ENCODE measurements at regions of chr5 and their contacts with region 1.

Region 1: GRCh38 chr5:67209142-67209771 is 12.7 kb upstream of the CD180 start:
- DNase-seq: peak; percentile 76 to 80
- H3K4me3 ChIP-seq: no peak overlapping the region
- H3K4me3 Mint-ChIP-seq: no peak overlapping the region
- H3K27ac Mint-ChIP-seq: no peak overlapping the region
- H3K4me1 ChIP-seq: no peaks in the 10 kb centered on the region
- H3K4me1 Mint-ChIP-seq: peaks cover 11% of the 10 kb centered on the region
- H3K27me3 ChIP-seq: no peaks in the 10 kb centered on the region
- H3K27me3 Mint-ChIP-seq: no peaks in the 10 kb centered on the region
- CTCF ChIP-seq: peak; percentile 72 to 84

Region 2: DNA sequence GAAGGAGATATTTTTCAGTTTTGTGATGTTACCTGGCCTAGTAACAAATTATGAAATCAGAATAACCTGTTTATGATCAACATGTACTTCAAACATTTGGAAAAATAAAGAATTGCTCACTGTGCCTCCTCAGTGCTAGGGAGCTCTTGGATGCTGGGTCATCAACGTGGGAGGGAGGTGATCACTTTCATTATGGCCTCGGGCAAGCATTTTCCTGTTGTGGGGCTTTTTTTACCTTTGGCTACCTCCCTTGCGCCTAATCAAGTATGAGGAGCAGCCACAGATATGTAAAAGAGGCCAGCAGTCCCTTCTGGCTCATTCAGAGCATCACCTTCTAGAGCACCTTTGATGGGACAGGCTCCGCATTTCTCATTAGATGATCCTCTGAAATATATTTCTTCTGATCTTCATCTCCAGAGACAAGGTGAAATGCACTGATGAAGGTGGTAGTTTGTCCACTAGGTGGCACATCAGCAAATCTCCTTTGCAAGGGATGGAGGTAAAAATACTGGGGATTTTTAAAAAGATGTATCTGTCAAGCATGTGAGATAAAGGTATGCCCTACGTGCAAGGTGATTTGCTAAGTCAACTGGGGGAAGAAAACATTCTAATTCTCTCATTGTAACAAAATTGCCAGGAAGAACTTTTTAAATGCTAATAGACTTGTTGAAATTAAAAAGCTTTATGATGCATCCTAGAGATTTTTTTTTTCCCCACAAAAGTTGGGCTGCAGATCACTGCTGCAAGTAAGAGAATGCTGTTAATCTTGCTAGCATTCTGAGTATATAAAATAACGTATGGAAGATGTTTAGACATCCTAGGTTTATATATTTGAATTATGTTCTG is 394.9 kb before region 1 on chr5:
- CTCF ChIA-PET with region 1: interaction called, 3 read pairs
- POLR2A ChIA-PET with region 1: no interaction called
- intact Hi-C with region 1: loop called (anchors 1 kb)
- DNase-seq: peak in 1 of 2 experiments; percentile 57
- H3K4me3 ChIP-seq: no peak overlapping the region
- H3K4me3 Mint-ChIP-seq: no peak overlapping the region
- H3K27ac Mint-ChIP-seq: no peak overlapping the region
- H3K4me1 ChIP-seq: no peaks in the 10 kb centered on the region; the same call in 1 of the 2 replicates
- H3K4me1 Mint-ChIP-seq: peaks cover 7% of the 10 kb centered on the region
- H3K27me3 ChIP-seq: no peaks in the 10 kb centered on the region
- H3K27me3 Mint-ChIP-seq: peaks cover 29% of the 10 kb centered on the region
- CTCF ChIP-seq: peak; percentile 61 to 84

Region 3: DNA sequence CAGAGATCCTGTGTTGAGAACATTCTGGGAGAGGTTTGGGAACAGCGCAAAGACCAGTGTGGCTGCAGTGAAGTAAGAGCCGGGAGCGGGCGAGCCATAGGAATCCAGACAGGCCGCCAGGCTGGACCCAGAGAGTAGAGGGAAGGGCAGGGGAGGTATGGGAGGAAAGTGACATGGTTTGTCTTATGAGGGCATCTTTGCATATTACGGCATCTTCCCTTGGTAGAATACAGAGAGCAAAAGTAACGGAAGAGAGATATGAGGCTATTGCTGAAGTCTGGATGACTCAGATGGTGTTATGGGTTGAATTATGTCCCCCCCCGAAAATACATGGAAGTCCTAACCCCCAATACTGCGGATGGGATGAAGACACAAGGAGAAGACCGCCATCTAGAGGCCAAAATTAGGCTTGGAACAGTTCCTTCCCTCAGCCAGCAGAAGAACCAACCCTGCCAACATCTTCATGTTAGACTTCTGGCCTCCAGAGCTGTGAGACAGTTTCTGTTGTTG is 344.9 kb before region 1 on chr5:
- CTCF ChIA-PET with region 1: interaction called, 3 read pairs
- POLR2A ChIA-PET with region 1: no interaction called
- intact Hi-C with region 1: loop called (anchors 1 kb)
- DNase-seq: peak; percentile 42 to 53
- H3K4me3 ChIP-seq: no peak overlapping the region
- H3K4me3 Mint-ChIP-seq: no peak overlapping the region
- H3K27ac Mint-ChIP-seq: no peak overlapping the region
- H3K4me1 ChIP-seq: no peaks in the 10 kb centered on the region
- H3K4me1 Mint-ChIP-seq: peaks cover 8% of the 10 kb centered on the region
- H3K27me3 ChIP-seq: peaks cover 2% of the 10 kb centered on the region
- H3K27me3 Mint-ChIP-seq: peaks cover 8% of the 10 kb centered on the region
- CTCF ChIP-seq: peak; percentile 59 to 62

Region 4: DNA sequence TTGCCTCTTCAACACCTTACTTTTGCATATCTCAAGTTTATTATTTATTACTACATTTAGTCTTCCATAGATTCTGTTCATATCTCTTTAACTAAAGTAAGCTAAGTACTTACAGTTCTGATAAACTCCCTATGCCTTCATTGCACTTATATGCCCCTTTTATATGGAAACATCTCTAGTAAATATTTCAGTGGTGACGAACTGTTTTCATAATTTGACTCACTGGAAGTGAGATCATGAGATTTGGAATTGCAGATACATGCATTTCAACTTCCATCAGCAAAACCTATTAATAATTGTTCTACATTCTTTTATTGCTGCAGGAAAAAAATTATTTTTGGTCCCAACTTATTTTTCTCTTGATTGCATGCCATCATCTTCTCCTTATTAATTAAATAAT is 276.2 kb before region 1 on chr5:
- CTCF ChIA-PET with region 1: no interaction called
- POLR2A ChIA-PET with region 1: no interaction called
- intact Hi-C with region 1: no loop called
- DNase-seq: no peak
- H3K4me3 ChIP-seq: no peak overlapping the region
- H3K4me3 Mint-ChIP-seq: no peak overlapping the region
- H3K27ac Mint-ChIP-seq: no peak overlapping the region
- H3K4me1 ChIP-seq: no peaks in the 10 kb centered on the region
- H3K4me1 Mint-ChIP-seq: no peaks in the 10 kb centered on the region
- H3K27me3 ChIP-seq: no peaks in the 10 kb centered on the region
- H3K27me3 Mint-ChIP-seq: peaks cover 2% of the 10 kb centered on the region
- CTCF ChIP-seq: no peak

Region 5: GRCh38 chr5:66987949-66988838 is 221.1 kb before region 1 on chr5:
- CTCF ChIA-PET with region 1: no interaction called
- POLR2A ChIA-PET with region 1: no interaction called
- intact Hi-C with region 1: loop called (anchors 5 kb)
- DNase-seq: no peak
- H3K4me3 ChIP-seq: no peak overlapping the region
- H3K4me3 Mint-ChIP-seq: no peak overlapping the region
- H3K27ac Mint-ChIP-seq: no peak overlapping the region
- H3K4me1 ChIP-seq: peaks cover 9% of the 10 kb centered on the region
- H3K4me1 Mint-ChIP-seq: peaks cover 27% of the 10 kb centered on the region
- H3K27me3 ChIP-seq: no peaks in the 10 kb centered on the region
- H3K27me3 Mint-ChIP-seq: no peaks in the 10 kb centered on the region
- CTCF ChIP-seq: peak; percentile 78 to 79

Region 6: DNA sequence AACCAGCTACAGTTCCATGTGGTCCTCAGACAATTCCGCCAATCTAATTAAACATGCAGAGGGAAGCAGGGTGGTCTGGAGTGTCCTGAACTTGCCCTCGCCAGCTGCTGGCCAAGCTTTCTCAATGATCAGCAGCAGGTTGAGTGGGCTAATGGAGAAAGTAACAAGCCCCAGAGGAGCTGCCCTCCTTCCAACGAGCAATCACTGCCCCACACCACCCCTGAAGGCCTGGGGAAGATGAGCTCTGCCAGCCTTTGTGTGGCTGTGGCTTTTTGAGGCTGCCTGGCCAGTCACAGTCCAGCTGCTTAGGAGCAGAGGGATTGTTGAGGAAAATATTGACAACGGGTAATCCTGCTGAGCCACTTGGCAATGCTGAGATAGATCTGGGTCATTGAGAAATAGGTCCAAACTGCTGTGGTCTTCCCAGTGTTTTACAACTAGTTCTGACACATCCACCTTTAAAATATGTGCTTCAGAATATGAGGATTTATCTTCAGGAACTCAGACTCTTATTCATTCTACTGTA is 120.0 kb before region 1 on chr5:
- CTCF ChIA-PET with region 1: no interaction called
- POLR2A ChIA-PET with region 1: no interaction called
- intact Hi-C with region 1: no loop called
- DNase-seq: no peak
- H3K4me3 ChIP-seq: no peak overlapping the region
- H3K4me3 Mint-ChIP-seq: no peak overlapping the region
- H3K27ac Mint-ChIP-seq: no peak overlapping the region
- H3K4me1 ChIP-seq: no peaks in the 10 kb centered on the region
- H3K4me1 Mint-ChIP-seq: peaks cover 6% of the 10 kb centered on the region
- H3K27me3 ChIP-seq: no peaks in the 10 kb centered on the region
- H3K27me3 Mint-ChIP-seq: no peaks in the 10 kb centered on the region
- CTCF ChIP-seq: no peak

Region 7: DNA sequence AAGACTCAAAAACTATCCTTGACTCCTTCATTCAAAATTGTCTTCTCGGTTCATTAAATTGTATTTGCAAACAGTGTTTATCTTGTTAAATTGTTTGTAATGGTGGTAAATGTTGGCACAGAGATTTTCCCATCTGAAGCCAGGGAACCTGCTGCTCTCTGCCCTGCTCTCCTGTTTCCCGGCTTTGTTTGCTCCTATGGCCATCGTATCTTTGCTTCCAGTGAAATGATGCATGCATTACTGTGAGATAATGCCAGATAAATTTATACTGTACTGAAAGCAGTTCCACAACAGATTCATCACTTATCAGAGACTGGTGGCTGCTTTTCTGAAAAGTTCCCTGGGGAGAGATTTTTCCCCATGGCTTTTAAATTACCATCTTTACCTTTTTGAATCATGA is 94.0 kb before region 1 on chr5:
- CTCF ChIA-PET with region 1: interaction called, 10 read pairs
- POLR2A ChIA-PET with region 1: no interaction called
- intact Hi-C with region 1: no loop called
- DNase-seq: no peak
- H3K4me3 ChIP-seq: no peak overlapping the region
- H3K4me3 Mint-ChIP-seq: no peak overlapping the region
- H3K27ac Mint-ChIP-seq: no peak overlapping the region
- H3K4me1 ChIP-seq: peaks cover 6% of the 10 kb centered on the region; the same call in 1 of the 2 replicates
- H3K4me1 Mint-ChIP-seq: peaks cover 17% of the 10 kb centered on the region
- H3K27me3 ChIP-seq: no peaks in the 10 kb centered on the region
- H3K27me3 Mint-ChIP-seq: no peaks in the 10 kb centered on the region
- CTCF ChIP-seq: no peak

Region 8: GRCh38 chr5:67156976-67157583 is 52.2 kb before region 1 on chr5:
- CTCF ChIA-PET with region 1: interaction called, 3 read pairs
- POLR2A ChIA-PET with region 1: no interaction called
- intact Hi-C with region 1: loop called (anchors 1 kb)
- DNase-seq: peak in 1 of 2 experiments; percentile 49
- H3K4me3 ChIP-seq: no peak overlapping the region
- H3K4me3 Mint-ChIP-seq: no peak overlapping the region
- H3K27ac Mint-ChIP-seq: no peak overlapping the region
- H3K4me1 ChIP-seq: no peaks in the 10 kb centered on the region
- H3K4me1 Mint-ChIP-seq: no peaks in the 10 kb centered on the region
- H3K27me3 ChIP-seq: no peaks in the 10 kb centered on the region
- H3K27me3 Mint-ChIP-seq: no peaks in the 10 kb centered on the region
- CTCF ChIP-seq: peak; percentile 82 to 88

Region 9: DNA sequence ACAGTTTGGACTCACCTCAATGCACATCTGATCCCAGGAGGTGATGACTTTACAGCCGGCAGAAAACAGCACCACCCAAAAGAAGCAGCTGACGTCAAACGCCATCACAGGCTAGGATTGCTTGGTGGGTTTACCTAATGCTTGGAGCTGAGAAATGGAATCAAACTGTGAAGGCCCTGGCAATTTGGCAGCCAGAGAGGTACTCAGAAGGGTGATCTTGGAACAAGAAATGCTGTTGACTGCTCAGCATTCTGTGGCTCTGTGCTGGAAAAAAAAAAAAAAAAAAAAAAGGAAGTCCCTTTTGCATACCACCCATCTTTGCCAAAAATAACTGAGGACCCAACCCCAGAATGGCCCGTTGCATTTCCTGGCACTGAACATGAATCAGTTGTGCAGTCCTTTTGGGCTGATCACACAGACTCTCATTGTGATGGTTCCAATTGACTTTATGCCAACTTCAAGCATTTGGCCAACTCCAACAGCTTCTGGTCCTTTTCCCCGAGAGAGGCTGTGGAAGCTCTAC is 12.7 kb before region 1 on chr5 and contains the start of gene CD180:
- CTCF ChIA-PET with region 1: no interaction called
- POLR2A ChIA-PET with region 1: no interaction called
- intact Hi-C with region 1: no loop called
- DNase-seq: no peak
- H3K4me3 ChIP-seq: no peak within 1 kb of the TSS
- H3K4me3 Mint-ChIP-seq: no peak within 1 kb of the TSS
- H3K27ac Mint-ChIP-seq: no peak within 1 kb of the TSS
- H3K4me1 ChIP-seq: no peaks in the 10 kb centered on the region
- H3K4me1 Mint-ChIP-seq: no peaks in the 10 kb centered on the region
- H3K27me3 ChIP-seq: no peaks in the 10 kb centered on the region; the same call in 1 of the 2 replicates
- H3K27me3 Mint-ChIP-seq: no peaks in the 10 kb centered on the region
- CTCF ChIP-seq: no peak
- total RNA-seq, gene CD180: not detected in 2 replicates

Region 10: DNA sequence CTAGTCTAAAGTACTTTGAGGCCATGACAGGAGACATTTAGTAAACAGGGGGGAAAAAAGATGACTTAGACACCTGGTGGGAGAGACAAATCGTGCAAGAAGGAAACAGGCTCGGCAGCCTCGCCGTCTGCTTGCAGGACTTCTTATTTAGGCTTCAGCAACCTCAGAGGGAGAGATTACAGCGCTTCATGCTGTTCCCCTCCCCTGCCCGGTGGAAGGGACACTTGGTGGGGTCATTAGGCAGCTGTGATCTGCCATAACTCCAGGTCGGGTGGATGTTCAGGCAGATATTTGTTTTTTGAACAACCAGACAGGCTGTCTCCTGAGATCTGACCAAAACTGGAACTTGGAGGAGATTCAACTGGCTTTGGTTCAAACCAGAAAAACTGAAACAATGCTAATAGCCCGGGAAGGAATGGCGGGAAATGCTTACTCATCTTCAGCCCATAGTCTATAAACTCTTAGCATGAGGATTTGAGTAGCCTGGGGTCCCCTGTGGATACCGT is 25.5 kb after region 1 on chr5:
- CTCF ChIA-PET with region 1: no interaction called
- POLR2A ChIA-PET with region 1: no interaction called
- intact Hi-C with region 1: no loop called
- DNase-seq: no peak
- H3K4me3 ChIP-seq: no peak overlapping the region
- H3K4me3 Mint-ChIP-seq: no peak overlapping the region
- H3K27ac Mint-ChIP-seq: no peak overlapping the region
- H3K4me1 ChIP-seq: peaks cover 15% of the 10 kb centered on the region
- H3K4me1 Mint-ChIP-seq: peaks cover 19% of the 10 kb centered on the region
- H3K27me3 ChIP-seq: no peaks in the 10 kb centered on the region
- H3K27me3 Mint-ChIP-seq: no peaks in the 10 kb centered on the region
- CTCF ChIP-seq: no peak